HCT116 (cell line): ENCODE measurements at regions of chr15 and their contacts with region 1.

Region 1: DNA sequence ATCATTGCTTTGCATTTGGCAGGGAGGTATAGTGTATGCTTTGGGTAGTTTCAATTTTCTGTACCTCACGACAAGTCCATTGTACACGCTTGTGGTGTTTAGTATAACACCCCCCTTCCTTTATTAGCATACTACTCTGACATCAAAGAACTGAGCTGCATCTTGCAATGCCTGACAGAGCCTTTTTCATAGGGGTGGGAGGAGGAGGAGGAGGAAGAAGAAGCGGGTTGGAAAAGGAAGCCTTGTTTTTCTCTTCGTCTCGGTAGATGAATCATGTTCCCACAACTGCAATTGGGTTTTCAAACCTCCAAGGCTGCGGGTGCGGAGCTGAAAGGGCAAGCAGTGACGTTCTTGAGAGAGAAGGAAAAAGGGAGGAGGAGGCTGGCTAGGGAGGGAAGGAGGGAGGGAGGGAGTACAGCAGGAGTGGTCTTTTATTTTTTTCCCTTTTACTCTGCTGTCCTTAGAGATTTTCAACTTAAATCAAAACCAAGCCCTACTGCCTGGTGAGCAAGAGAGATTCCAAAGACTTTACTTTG is 175.7 kb downstream of the KLHL25 start:
- DNase-seq: no peak
- ATAC-seq: no peak
- H3K4me3 ChIP-seq: no peak overlapping the region
- H3K27ac ChIP-seq: no peak overlapping the region
- H3K4me1 ChIP-seq: peaks cover 0 to 5% of the 10 kb centered on the region in 2 experiments; a peak in 1 of 4 replicates
- H3K27me3 ChIP-seq: no peaks in the 10 kb centered on the region
- CTCF ChIP-seq: no peak
- POLR2A ChIP-seq: no peak
- RAD21 ChIP-seq: no peak

Region 2: DNA sequence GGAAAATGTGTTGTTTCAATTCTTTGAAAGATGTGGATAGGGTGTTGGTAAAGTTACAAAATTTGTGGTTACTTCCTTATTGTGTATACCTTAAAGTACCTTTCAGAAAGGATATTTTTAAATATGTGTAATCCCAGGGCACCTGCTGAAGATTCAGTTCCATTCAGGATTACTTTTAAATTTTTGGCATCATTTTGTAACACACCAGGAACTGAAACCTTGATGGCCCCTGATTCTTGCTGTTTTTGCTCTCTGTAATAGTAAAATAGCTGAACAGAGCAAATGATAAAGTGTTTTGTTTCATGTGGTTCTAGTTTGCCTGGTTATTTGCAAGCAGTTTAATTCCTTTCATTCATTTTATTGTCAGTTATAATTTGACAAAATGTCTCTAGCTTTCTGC is 14.8 kb after region 1 on chr15:
- CTCF ChIA-PET with region 1: no interaction called
- POLR2A ChIA-PET with region 1: no interaction called
- RAD21 ChIA-PET with region 1: no interaction called
- intact Hi-C with region 1: loop called (anchors 1 kb)
- DNase-seq: no peak
- ATAC-seq: no peak
- H3K4me3 ChIP-seq: no peak overlapping the region
- H3K27ac ChIP-seq: no peak overlapping the region
- H3K4me1 ChIP-seq: no peaks in the 10 kb centered on the region
- H3K27me3 ChIP-seq: no peaks in the 10 kb centered on the region
- CTCF ChIP-seq: no peak
- POLR2A ChIP-seq: no peak
- RAD21 ChIP-seq: no peak

Region 3: DNA sequence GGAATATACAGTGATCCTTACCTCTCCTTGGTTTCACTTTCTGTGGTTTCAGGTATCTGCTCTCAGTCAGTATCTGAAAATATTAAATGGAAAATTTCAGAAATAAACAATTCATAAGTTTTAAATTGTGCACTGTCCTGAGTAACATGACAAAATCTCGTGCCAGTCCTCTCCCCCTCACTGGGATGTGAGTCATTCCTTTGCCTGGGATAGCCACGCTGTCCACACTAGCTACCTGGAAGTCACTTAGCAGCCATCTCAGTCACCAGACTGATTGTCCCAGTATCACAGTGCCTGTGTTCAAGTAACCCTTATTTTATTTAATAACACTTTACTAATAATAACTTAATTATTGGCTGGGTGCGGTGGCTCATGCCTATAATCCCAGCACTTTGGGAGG is 191.1 kb after region 1 on chr15:
- CTCF ChIA-PET with region 1: no interaction called
- POLR2A ChIA-PET with region 1: no interaction called
- RAD21 ChIA-PET with region 1: no interaction called
- intact Hi-C with region 1: no loop called
- DNase-seq: no peak
- ATAC-seq: no peak; the same call in 1 of the 2 replicates
- H3K4me3 ChIP-seq: 0 out of 4 replicates have a peak overlapping the region, but pooled peaks of 1 of the 2 experiments have one; percentile 16
- H3K27ac ChIP-seq: no peak overlapping the region
- H3K4me1 ChIP-seq: peaks cover 0 to 4% of the 10 kb centered on the region in 2 experiments; a peak in 2 of 4 replicates
- H3K27me3 ChIP-seq: no peaks in the 10 kb centered on the region
- CTCF ChIP-seq: no peak
- POLR2A ChIP-seq: no peak
- RAD21 ChIP-seq: no peak

Region 4: DNA sequence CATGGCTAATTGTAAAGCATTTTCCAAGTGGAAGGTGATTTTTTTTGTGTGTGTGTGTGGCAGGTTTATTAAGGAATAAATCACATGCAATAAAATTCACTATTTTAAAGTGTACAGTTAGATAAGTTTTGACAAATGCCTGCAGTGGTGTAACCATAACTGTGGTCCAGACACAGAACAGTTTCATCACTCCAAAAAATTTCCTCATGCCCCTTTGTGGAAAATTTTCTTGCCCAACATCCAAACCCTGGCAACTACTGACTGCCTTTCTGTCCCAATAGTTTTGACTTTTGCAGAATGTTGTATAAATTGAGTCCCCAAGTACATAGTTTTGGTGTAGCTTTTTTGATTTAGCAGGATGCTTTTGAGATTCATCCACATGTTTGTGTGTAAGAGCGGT is 310.8 kb after region 1 on chr15:
- CTCF ChIA-PET with region 1: no interaction called
- POLR2A ChIA-PET with region 1: no interaction called
- RAD21 ChIA-PET with region 1: no interaction called
- intact Hi-C with region 1: loop called (anchors 10 kb)
- DNase-seq: no peak
- ATAC-seq: no peak
- H3K4me3 ChIP-seq: no peak overlapping the region
- H3K27ac ChIP-seq: no peak overlapping the region
- H3K4me1 ChIP-seq: no peaks in the 10 kb centered on the region
- H3K27me3 ChIP-seq: peaks cover 12% of the 10 kb centered on the region
- CTCF ChIP-seq: no peak
- POLR2A ChIP-seq: no peak
- RAD21 ChIP-seq: no peak